Mammary epithelial cell (primary cell): ENCODE measurements at regions of chr13 and their contacts with region 1.

Region 1: DNA sequence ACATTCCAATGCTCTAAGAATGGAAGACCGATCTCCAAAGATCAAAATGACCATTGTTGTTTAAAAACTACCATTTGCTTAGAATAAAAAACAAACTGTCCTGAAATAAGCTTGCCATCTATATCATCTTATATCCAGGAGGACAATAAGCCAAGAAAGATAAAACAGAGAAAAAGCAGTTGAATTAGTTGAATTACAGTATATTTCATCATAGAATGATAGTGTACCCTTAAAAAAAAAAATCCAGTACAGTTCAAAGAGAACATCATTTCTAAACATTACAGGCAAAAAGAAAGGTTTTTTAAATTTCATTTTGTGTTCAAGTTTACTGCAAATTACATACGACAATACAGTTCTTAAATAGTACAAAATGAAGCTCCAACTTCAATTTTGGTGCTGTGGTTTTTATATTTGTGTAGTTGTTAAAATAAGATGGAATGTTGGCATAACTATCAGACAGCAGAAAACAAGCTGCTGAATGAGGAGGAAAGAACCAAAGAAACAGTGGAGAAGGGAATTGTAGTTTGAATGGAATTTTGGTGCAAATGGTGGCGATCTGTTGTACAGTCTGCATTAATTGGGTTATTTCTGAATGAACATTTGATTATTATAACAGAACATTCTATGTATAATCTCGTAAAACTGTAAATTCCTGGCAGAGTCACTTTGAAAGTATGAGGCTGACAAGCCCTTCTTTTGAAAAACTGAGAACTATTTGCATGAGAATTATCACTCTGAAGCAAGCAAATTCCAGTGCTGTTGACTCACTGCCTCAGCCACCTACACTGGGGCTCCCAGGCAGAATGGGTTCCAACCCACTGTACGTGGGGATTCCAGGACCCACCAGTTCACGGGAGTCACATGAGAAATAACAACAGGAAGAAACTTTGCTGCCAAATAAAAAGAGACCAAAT is 37.7 kb downstream of the LHFPL6 start:
- DNase-seq: peak; percentile 87
- H3K4me3 ChIP-seq: peak overlapping the region; percentile 11 to 25 (median 14)
- H3K27ac ChIP-seq: peak overlapping the region; percentile 88
- H3K4me1 ChIP-seq: peaks cover 49% of the 10 kb centered on the region
- H3K27me3 ChIP-seq: no peaks in the 10 kb centered on the region
- CTCF ChIP-seq: no peak

Region 2: GRCh38 chr13:39379118-39379517 is 186.2 kb before region 1 on chr13:
- CTCF ChIA-PET with region 1: no interaction called
- dilution Hi-C with region 1: no loop called
- in situ Hi-C with region 1: no loop called
- intact Hi-C with region 1: no loop called
- DNase-seq: no peak
- H3K4me3 ChIP-seq: no peak overlapping the region
- H3K27ac ChIP-seq: no peak overlapping the region
- H3K4me1 ChIP-seq: peaks cover 12% of the 10 kb centered on the region
- H3K27me3 ChIP-seq: no peaks in the 10 kb centered on the region
- CTCF ChIP-seq: no peak

Region 3: GRCh38 chr13:39494006-39494405 is 71.3 kb before region 1 on chr13:
- CTCF ChIA-PET with region 1: no interaction called
- dilution Hi-C with region 1: no loop called
- in situ Hi-C with region 1: no loop called
- intact Hi-C with region 1: no loop called
- DNase-seq: no peak
- H3K4me3 ChIP-seq: no peak overlapping the region
- H3K27ac ChIP-seq: no peak overlapping the region
- H3K4me1 ChIP-seq: no peaks in the 10 kb centered on the region
- H3K27me3 ChIP-seq: no peaks in the 10 kb centered on the region
- CTCF ChIP-seq: no peak

Region 4: DNA sequence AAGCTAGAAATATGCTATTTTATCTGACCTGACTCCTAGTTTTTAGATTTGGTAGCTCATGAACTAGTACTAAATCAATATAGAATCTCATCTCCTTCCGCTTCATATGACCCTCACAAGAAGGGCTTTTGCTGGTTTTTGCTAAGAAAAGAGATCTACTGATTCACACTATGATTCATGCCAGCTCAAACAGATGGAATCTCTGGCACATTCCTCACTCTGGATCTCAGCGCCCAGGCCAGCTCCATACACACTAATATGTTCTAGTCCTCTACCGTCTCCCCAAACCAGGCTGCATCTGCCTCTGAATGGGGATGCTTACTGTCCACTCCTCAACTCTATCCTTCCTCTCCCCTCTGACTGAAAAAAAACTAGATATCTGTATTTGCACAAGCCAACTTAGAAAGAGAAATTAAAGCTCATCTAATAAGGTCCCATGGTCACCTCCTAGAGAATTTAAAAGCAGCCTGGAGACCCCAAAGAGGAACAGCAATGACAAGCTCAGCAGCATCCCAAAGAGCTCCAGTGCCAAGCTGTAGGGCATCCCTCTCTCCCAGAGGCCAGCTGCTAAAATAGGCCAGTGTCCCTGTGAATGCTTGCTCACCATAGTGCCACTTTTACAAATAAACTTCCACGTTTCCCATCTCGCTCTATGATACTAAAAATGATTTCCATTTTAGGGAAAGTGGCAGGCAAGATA is 37.2 kb before region 1 on chr13:
- CTCF ChIA-PET with region 1: no interaction called
- dilution Hi-C with region 1: no loop called
- in situ Hi-C with region 1: no loop called
- intact Hi-C with region 1: loop called (anchors 2 kb)
- DNase-seq: peak; percentile 79
- H3K4me3 ChIP-seq: no peak overlapping the region
- H3K27ac ChIP-seq: peak overlapping the region; percentile 50
- H3K4me1 ChIP-seq: peaks cover 35% of the 10 kb centered on the region
- H3K27me3 ChIP-seq: no peaks in the 10 kb centered on the region
- CTCF ChIP-seq: no peak